ENCODE measurements at regions of chr17 and their contacts with region 1.

Region 1: DNA sequence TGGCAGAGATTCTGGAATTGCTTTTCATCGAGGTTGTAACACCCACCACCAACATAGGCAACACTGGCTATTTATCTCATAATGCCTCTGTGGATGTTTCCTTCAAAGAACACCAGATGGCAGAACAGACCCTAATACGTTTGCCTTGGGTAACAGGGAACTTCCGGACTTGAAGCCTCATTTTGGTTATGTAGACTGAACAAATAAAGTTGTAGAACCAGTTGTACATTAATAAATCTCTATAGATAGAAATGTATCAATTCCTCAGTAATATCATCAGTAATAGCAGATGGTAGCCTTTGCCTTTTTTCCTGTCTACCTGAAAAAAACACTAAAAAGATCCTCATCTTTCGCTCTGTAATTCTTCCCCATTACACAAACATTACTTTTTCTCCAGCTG is 25.9 kb upstream of the APOH start:
- DNase-seq: peak in 4 of 5 donors; percentile 9 to 70 (median 54)
- H3K4me3 ChIP-seq: peak overlapping the region; percentile 19
- H3K4me3 Mint-ChIP-seq: peak overlapping the region in 5 of 7 donors; percentile 27 to 65 (median 53)
- H3K27ac ChIP-seq: no peak overlapping the region
- H3K27ac Mint-ChIP-seq: peak overlapping the region in 6 of 8 donors; percentile 13 to 89 (median 77)
- H3K4me1 ChIP-seq: peaks cover 15% of the 10 kb centered on the region
- H3K4me1 Mint-ChIP-seq: peaks cover 11 to 19% (median 12%) of the 10 kb centered on the region in 3 donors
- H3K27me3 ChIP-seq: no peaks in the 10 kb centered on the region
- H3K27me3 Mint-ChIP-seq: no peaks in the 10 kb centered on the region

Region 2: DNA sequence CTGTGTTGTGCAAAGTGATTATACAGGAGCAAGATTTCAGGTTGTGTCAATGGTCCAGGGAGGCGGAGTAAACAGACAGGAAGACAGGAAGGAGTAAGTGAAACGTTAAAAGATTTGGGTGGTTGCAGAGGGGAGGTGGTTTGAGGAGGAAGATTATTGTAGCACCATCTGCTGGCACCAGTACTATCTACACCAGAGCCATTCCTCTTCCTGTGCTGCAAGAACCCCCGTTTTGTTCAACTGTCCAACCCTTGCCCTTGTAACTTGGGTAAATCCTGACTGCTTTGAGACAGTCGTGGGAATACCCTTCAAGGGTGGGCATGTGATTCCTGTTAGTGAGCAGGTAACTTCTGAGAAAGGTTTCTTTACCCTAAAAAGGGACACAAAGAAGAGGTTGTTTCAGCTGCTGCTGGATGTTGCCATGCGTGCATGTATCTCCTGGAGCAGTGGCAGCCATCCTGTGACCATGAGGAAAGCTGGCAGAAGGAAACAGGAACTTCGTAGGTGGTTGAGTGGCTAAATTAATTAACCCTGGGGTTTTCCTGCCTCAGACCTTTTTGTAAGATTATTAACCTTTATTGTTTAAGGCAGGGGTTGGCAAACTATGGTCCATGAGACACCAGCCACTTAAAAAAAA is 171.4 kb after region 1 on chr17:
- CTCF ChIA-PET with region 1: interaction called, 10 read pairs
- POLR2A ChIA-PET with region 1: no interaction called
- DNase-seq: peak in 4 of 5 donors; percentile 1 to 67 (median 48)
- H3K4me3 ChIP-seq: no peak overlapping the region
- H3K4me3 Mint-ChIP-seq: peak overlapping the region in 6 of 7 donors; percentile 49 to 78 (median 68)
- H3K27ac ChIP-seq: no peak overlapping the region
- H3K27ac Mint-ChIP-seq: peak overlapping the region; percentile 12 to 87 (median 46)
- H3K4me1 ChIP-seq: peaks cover 19% of the 10 kb centered on the region
- H3K4me1 Mint-ChIP-seq: peaks cover 23 to 43% (median 25%) of the 10 kb centered on the region in 3 donors
- H3K27me3 ChIP-seq: no peaks in the 10 kb centered on the region
- H3K27me3 Mint-ChIP-seq: no peaks in the 10 kb centered on the region